Dendritic cell treated with granulocyte-macrophage colony-stimulating factor and Interleukin-4, amounts not matched to agents 40 ng/mL and 50 ng/mL, for 4 days (primary cell): ENCODE measurements at regions of chr9 and their contacts with region 1.

Region 1: GRCh38 chr9:116987721-116988485 is 300.8 kb downstream of the TRIM32 start:
- H3K4me3 Mint-ChIP-seq: no peak overlapping the region
- H3K27ac Mint-ChIP-seq: no peak overlapping the region
- H3K4me1 Mint-ChIP-seq: peaks cover 41% of the 10 kb centered on the region
- H3K27me3 Mint-ChIP-seq: no peaks in the 10 kb centered on the region

Region 2: GRCh38 chr9:116928884-116929283 is 59.0 kb before region 1 on chr9:
- intact Hi-C with region 1: loop called (anchors 5 kb)
- H3K4me3 Mint-ChIP-seq: no peak overlapping the region
- H3K27ac Mint-ChIP-seq: no peak overlapping the region
- H3K4me1 Mint-ChIP-seq: peaks cover 26% of the 10 kb centered on the region
- H3K27me3 Mint-ChIP-seq: peaks cover 1% of the 10 kb centered on the region

Region 3: DNA sequence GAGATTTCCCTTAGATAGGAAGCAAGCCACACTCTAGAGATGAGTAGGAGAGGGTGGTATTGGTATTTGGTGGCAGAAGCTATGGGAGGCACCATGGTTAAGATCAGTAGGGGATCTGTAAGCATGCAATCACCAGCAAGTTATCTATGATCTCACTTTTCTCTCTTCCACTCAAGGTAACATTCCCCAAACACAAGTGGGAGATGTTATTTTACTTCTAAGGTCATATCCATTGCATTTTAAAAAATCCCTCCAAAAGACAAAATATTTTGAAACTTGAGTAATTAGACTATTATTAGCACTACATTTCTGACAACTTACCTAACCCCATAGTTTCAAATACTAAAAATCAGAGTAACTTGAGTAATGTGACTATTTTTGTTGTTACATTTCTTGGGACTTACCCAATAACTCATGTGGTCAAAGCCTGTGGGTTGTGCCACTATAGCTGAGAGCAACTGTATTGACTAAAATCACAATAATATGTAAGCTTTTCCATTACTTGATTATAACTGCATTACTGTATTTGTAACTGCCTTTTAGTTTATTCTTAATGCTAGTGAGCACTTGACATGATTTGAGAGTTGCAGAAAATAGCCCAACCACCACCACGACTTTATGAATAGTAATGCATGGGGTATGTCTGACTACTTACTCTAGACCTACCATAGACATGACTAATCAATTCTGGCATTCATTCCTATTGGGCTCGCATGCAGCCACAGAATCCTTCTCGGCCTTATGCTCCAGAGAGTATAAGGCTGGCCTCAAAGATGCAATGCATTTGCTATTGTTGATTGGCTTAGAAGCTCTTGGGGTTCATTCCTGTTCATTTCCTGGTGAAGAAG is 36.1 kb before region 1 on chr9:
- intact Hi-C with region 1: no loop called
- H3K4me3 Mint-ChIP-seq: no peak overlapping the region
- H3K27ac Mint-ChIP-seq: no peak overlapping the region
- H3K4me1 Mint-ChIP-seq: peaks cover 26% of the 10 kb centered on the region
- H3K27me3 Mint-ChIP-seq: peaks cover under 1% of the 10 kb centered on the region